ENCODE measurements at regions of chr11 and their contacts with region 1.

Region 1: GRCh38 chr11:1458340-1459218 is 28.0 kb downstream of the MOB2 start:
- DNase-seq: peak; percentile 96
- H3K4me3 ChIP-seq: peak overlapping the region; percentile 41 to 55 (median 48)
- H3K27ac ChIP-seq: peak overlapping the region; percentile 86 to 94 (median 94)
- H3K4me1 ChIP-seq: peaks cover 0 to 52% (median 47%) of the 10 kb centered on the region in 4 donors
- H3K27me3 ChIP-seq: no peaks in the 10 kb centered on the region
- CTCF ChIP-seq: peak in 3 of 4 experiments; percentile 10 to 46 (median 32)
- EP300 ChIP-seq: no peak
- POLR2A ChIP-seq: no peak

Region 2: GRCh38 chr11:1358286-1358685 is 100.3 kb before region 1 on chr11:
- intact Hi-C with region 1: no loop called
- DNase-seq: no peak
- H3K4me3 ChIP-seq: no peak overlapping the region
- H3K27ac ChIP-seq: no peak overlapping the region
- H3K4me1 ChIP-seq: no peaks in the 10 kb centered on the region
- H3K27me3 ChIP-seq: peaks cover 0 to 12% (median 0%) of the 10 kb centered on the region in 3 donors
- CTCF ChIP-seq: no peak
- EP300 ChIP-seq: no peak
- POLR2A ChIP-seq: no peak

Region 3: DNA sequence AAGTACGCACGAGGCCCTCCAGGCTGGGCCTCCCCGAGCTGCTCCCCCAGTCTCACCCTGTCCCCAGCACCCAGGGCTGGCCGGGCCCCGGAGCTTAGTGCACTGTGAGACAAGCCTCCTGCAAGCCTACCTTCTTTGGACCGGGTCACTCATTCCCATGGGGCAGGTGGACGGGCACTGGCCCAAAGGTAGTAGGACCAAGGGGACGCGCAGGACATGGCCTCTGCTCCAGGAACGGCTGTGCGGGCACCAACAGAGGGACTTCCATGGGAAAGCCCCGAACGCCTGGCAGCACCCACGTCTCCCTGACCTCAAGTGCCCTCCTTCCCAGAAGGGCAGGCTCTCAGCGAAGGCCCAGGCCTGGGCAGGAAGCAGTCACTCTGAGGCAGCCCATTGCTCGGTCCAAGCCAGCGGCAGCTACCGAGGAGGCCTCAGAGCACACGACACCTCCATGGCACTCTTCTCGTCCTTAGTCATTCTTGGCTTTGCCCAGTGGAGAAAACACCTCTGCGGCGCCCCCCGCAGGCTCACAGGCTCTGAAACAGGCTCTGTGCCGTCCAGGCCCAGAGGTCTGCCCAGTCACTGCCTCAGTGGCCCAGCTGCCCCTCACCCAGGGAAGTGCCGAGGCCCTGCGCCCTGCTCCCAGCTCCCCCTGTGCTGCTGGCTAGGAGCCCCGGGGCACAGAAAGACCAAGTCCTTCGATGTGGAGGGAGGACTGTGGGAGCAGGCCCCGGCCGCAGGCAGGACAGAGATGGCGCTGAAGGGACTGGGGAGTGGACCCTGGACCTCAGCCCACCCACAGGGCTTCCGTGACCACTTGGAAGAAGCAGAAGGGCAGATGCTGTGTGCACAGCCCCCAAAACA is 24.2 kb after region 1 on chr11:
- intact Hi-C with region 1: loop called (anchors 2 kb)
- DNase-seq: peak; percentile 75
- H3K4me3 ChIP-seq: peak overlapping the region in 2 of 4 donors; percentile 8 to 52
- H3K27ac ChIP-seq: peak overlapping the region; percentile 92 to 96 (median 94)
- H3K4me1 ChIP-seq: peaks cover 0 to 99% (median 82%) of the 10 kb centered on the region in 4 donors
- H3K27me3 ChIP-seq: no peaks in the 10 kb centered on the region
- CTCF ChIP-seq: no peak
- EP300 ChIP-seq: no peak
- POLR2A ChIP-seq: no peak

Region 4: DNA sequence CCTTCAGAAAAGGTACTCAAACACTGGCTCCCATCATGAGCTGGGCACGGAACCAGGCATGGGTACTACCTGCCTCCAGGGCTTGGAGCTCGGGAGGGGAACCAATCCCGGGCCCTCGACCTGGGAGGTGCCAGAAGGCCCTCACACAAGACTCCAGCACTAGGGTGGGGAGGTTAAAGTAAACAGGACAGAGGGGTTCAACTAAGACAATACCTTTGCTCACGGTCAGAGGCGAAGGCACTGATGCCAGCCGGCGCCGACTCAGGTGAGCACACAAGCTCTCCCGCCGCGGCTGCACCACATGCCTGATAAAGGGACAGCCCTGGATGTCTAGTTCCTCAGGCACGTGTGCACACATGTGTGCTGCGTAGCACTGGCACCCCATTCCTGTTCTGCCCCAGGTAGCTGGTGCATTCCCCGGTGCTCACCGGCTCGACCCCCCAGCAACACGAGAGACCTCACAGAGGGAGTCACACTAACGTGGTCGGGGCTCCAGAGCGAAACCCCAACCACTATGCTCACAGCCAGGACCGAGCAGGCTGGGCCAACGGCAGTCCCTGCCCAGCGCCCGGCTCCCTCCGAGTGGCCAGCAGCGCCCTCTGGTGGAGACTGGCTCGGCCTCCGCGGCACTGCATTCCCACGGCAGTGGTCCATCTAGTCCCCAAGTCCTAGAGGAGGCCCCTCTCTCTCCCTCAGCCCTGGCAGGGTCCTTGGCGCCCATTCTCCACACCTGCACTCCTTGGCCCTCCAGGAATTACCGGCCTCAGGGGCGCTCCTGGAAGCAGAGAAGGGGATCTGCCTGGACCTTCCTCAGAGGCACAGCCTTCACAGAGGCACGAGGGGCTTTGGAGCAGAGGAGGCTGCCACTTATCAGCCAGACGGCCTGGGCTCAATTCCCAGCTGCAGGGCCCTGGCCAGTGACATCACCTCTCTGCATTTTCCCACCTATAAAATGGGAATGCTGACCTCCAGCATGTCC is 56.8 kb after region 1 on chr11:
- intact Hi-C with region 1: loop called (anchors 2 kb)
- DNase-seq: peak; percentile 88
- H3K4me3 ChIP-seq: peak overlapping the region in 2 of 4 donors; percentile 15 to 20
- H3K27ac ChIP-seq: peak overlapping the region in 3 of 4 donors; percentile 39 to 56 (median 44)
- H3K4me1 ChIP-seq: peaks cover 0 to 67% (median 50%) of the 10 kb centered on the region in 4 donors
- H3K27me3 ChIP-seq: no peaks in the 10 kb centered on the region
- CTCF ChIP-seq: peak; percentile 89 to 96 (median 92)
- EP300 ChIP-seq: no peak
- POLR2A ChIP-seq: no peak

Region 5: DNA sequence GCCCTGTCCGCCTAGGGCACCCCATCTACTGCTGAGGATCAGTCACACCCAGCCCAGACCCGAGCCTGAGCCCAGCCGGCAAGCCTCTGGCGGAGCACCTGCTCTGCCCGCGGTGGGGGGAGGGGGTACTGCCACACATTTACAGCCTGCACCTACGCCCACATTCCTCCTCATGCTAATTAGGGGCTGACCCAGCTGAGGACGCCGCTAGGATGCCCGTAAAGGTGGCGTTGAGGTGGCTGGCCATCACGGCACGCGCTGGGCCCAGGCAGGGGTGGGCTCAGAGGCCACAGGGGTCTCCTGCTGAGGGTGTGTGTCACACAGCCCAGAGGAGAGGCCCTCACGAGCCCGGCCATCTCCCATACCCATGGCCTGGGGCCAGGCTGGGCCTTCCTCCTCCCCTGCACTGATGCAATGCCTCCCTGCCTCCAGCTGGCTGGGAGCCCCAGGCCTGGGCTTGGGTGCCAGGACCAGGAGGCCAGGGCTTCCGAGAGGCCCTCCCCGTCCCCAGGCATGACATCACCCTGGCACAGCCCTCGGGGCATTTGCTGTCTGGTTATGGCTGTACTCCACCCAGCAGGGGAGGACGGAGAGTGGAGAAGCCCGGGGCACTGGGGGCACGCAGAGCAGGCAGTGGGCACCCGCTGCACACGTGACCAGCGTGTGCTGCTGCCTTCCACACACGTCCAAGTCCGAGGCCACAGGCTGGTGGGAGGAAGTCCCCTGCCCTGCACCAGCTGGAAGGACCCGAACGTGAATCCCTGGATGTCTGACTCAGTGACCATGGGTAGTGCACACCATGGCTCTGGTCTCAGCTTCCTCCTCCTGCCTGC is 100.8 kb after region 1 on chr11:
- intact Hi-C with region 1: loop called (anchors 5 kb)
- DNase-seq: peak; percentile 99
- H3K4me3 ChIP-seq: peak overlapping the region in 2 of 4 donors; percentile 9 to 10
- H3K27ac ChIP-seq: peak overlapping the region; percentile 92 to 99 (median 95)
- H3K4me1 ChIP-seq: peaks cover 0 to 53% (median 41%) of the 10 kb centered on the region in 4 donors
- H3K27me3 ChIP-seq: no peaks in the 10 kb centered on the region
- CTCF ChIP-seq: peak in 1 of 4 experiments; percentile 19
- EP300 ChIP-seq: peak in 2 of 4 donors; percentile 78 to 89
- POLR2A ChIP-seq: peak in 1 of 2 donors; percentile 13

Region 6: GRCh38 chr11:1572197-1573076 is 113.9 kb after region 1 on chr11 and contains the start of gene DUSP8:
- intact Hi-C with region 1: loop called (anchors 5 kb)
- DNase-seq: peak; percentile 96
- H3K4me3 ChIP-seq: peak within 1 kb of the TSS; percentile 45 to 77 (median 56)
- H3K27ac ChIP-seq: peak within 1 kb of the TSS; percentile 80 to 99 (median 83)
- H3K4me1 ChIP-seq: peaks cover 0 to 66% (median 58%) of the 10 kb centered on the region in 4 donors
- H3K27me3 ChIP-seq: no peaks in the 10 kb centered on the region
- CTCF ChIP-seq: no peak
- EP300 ChIP-seq: no peak
- POLR2A ChIP-seq: no peak
- total RNA-seq, gene DUSP8: 0.66 to 4.4 (median 2.1) TPM

Region 7: DNA sequence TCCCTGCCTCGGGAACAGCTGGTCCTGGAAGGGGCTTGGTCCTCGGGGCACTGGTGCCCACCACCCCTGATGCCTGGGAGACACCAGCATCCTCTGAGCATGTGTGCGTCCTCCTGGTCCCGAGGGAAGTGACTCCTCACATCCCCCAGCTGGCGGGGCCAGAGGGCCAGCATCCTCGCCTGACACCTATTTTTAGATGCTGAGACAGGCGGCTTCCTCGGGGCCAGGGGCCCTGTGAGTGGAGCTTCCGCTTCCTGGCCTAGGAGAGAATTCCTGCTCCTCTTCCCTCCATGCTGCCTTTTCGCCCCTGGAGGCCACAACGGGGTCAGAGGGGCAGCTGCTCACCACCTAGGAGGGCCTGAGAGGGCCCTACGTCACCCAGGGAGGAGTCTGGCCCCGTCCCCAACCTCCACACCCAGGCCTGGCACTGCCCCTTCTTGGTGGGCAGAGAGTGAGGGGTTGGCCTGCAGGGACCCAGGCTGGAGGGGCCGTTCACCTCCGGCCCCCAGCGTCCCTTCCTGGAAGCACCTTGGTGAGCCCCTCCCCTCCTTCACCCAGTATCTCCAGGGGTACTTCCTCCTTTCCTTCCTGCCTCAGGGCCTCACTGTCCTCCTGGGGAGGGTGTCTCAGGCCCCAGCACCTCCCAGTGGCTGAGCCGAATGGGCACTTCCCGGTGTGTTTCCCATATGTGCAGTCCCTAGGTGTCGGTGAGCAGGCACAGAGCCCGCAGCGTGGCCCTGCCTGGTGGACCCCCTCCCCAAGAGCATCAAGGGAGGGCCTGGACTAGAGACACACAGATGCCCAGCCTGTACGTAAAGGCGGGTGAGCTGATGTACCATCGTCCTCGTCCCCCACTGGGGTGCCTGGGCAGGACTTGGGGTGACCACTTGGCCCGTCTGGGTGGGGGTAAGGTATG is 924.6 kb after region 1 on chr11:
- intact Hi-C with region 1: loop called (anchors 10 kb)
- DNase-seq: peak; percentile 92
- H3K4me3 ChIP-seq: peak overlapping the region in 2 of 4 donors; percentile 1 to 18
- H3K27ac ChIP-seq: peak overlapping the region; percentile 99 to 100 (median 100)
- H3K4me1 ChIP-seq: peaks cover 0 to 95% (median 93%) of the 10 kb centered on the region in 4 donors
- H3K27me3 ChIP-seq: no peaks in the 10 kb centered on the region
- CTCF ChIP-seq: peak in 1 of 4 experiments; percentile 7
- EP300 ChIP-seq: no peak
- POLR2A ChIP-seq: no peak